ENCODE measurements at regions of chr1 and their contacts with region 1.

Region 1: GRCh38 chr1:30707412-30708360 is 15.7 kb downstream of the MATN1 start:
- DNase-seq: peak; percentile 68 to 91 (median 80)
- H3K4me3 ChIP-seq: no peak overlapping the region
- H3K27ac ChIP-seq: no peak overlapping the region
- H3K4me1 ChIP-seq: peaks cover 0 to 5% of the 10 kb centered on the region in 2 donors
- H3K27me3 ChIP-seq: no peaks in the 10 kb centered on the region
- CTCF ChIP-seq: peak; percentile 67 to 98 (median 94)
- POLR2A ChIP-seq: no peak

Region 2: GRCh38 chr1:30379684-30380624 is 327.7 kb before region 1 on chr1:
- intact Hi-C with region 1: loop called in 1 of 2 experiments (anchors 10 kb)
- DNase-seq: peak; percentile 41 to 75 (median 66)
- H3K4me3 ChIP-seq: no peak overlapping the region
- H3K27ac ChIP-seq: no peak overlapping the region
- H3K4me1 ChIP-seq: no peaks in the 10 kb centered on the region
- H3K27me3 ChIP-seq: peaks cover 4% of the 10 kb centered on the region
- CTCF ChIP-seq: peak; percentile 73 to 90 (median 80)
- POLR2A ChIP-seq: no peak

Region 3: DNA sequence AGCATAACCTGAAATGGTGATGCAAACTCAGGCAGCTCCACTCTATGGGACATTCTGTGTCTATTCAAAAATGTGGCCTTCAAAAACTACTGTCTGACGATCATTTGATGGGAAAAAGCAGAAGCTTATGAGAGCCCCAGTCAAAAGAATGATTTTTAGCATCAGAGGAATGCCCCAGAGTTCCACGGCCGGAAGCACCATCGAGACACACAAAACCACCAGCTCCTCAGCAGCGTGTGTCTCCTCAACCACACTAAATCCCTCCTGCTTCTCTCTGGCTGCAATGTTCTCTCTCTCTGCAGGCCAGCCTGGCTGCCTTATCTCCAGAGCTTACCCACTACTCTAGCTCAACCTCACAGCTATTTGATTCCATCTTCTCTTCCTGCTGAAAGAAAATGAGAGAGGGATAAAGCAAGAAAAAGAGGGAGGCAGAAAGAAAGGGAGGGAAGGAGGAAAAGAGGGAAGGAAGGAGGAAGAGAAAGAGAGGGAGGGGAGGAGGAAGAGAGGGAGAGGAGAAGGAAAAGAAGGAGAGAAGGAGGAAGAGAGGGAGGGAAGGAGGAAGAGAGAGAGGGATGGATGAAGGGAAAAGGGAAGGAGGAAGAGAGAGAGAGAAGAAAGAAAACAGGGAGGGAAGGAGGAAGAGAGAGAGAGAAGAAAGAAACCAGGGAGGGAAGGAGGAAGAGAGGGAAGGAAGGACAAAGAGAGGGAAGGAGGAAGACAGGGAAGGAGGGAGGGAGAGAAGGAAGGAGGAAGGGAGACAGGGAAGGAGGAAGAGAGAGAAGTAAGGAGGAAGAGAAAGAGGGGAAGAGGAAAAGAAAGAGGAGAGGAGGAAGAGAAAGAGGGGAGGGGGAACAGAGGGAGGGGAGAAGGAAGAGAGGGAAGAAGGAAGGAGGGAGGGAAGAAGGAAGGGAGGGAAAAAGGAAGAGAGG is 83.4 kb after region 1 on chr1:
- intact Hi-C with region 1: no loop called
- DNase-seq: no peak
- H3K4me3 ChIP-seq: no peak overlapping the region
- H3K27ac ChIP-seq: peak overlapping the region in 1 of 5 donors; percentile 26
- H3K4me1 ChIP-seq: peaks cover 16 to 24% of the 10 kb centered on the region in 2 donors
- H3K27me3 ChIP-seq: no peaks in the 10 kb centered on the region
- CTCF ChIP-seq: no peak
- POLR2A ChIP-seq: no peak